Activated T-helper 1 cell treated with anti-CD3 and anti-CD28 coated beads, Interleukin-12 subunit alpha, Interleukin-12 subunit beta, Interleukin-2, Interleukin-4 antibody, amounts not matched to agents 30 ng/mL and 10 ng/mL and 1 ng/mL, durations not matched to agents 14 hours and 24 hours and 36 hours (primary cell): ENCODE measurements at regions of chr2 and their contacts with region 1.

Region 1: GRCh38 chr2:128623776-128624424 is 305.2 kb upstream of the HS6ST1 start:
- DNase-seq: peak; percentile 40
- H3K4me3 Mint-ChIP-seq: peak overlapping the region; percentile 74
- H3K27ac Mint-ChIP-seq: peak overlapping the region; percentile 82
- H3K4me1 Mint-ChIP-seq: peaks cover 31% of the 10 kb centered on the region
- H3K27me3 Mint-ChIP-seq: peaks cover 25% of the 10 kb centered on the region

Region 2: GRCh38 chr2:127563458-127564428 is 1060.2 kb before region 1 on chr2:
- intact Hi-C with region 1: loop called (anchors 5 kb)
- DNase-seq: peak; percentile 46
- H3K4me3 Mint-ChIP-seq: peak overlapping the region; percentile 12
- H3K27ac Mint-ChIP-seq: peak overlapping the region; percentile 30
- H3K4me1 Mint-ChIP-seq: peaks cover 16% of the 10 kb centered on the region
- H3K27me3 Mint-ChIP-seq: peaks cover 32% of the 10 kb centered on the region

Region 3: DNA sequence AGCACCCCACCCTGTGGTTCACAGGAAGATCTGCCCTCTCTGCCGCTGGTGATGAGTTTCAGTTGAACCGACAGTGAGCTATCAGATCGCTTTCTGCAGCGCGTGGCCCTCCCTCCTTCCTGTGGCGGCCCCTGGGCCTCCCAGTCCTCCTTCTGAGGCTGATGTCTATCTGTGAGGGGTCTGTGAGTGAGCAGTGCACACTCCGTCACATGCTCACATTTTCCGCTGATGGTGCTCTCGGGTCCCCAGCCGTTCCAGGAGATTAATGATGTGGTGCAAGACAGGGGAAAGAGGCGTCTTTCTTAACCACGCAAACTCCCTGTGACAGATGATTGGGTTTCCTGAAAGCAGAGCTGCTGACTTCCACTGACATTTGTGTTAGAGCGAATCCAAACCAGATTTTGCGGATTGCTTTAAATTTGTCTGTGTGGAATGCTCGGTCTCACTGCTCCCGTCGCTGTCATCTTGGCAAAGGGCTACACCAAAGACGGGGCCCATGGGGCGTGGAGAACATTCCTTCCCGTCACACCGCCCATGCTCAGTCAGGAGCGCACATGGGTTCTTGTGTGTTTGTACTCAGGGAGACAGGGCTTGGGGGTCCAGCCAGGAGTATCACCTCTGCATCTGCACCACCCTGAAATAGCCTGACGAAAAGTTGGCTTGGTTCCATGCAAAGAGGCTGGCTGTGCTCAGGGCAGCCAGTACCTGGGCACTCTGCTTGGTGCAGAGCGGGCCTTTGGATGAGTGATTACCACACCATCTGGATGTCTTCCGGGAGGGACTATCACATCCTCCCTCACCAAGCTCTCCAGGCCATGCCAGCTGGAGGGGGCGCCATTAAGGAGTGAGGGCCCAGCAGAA is 150.5 kb before region 1 on chr2:
- intact Hi-C with region 1: loop called (anchors 1 kb)
- DNase-seq: peak; percentile 26
- H3K4me3 Mint-ChIP-seq: peak overlapping the region; percentile 67
- H3K27ac Mint-ChIP-seq: peak overlapping the region; percentile 86
- H3K4me1 Mint-ChIP-seq: peaks cover 20% of the 10 kb centered on the region
- H3K27me3 Mint-ChIP-seq: peaks cover 6% of the 10 kb centered on the region

Region 4: GRCh38 chr2:128536925-128537620 is 86.8 kb before region 1 on chr2:
- intact Hi-C with region 1: loop called (anchors 1 kb)
- DNase-seq: no peak
- H3K4me3 Mint-ChIP-seq: no peak overlapping the region
- H3K27ac Mint-ChIP-seq: peak overlapping the region; percentile 4
- H3K4me1 Mint-ChIP-seq: peaks cover 24% of the 10 kb centered on the region
- H3K27me3 Mint-ChIP-seq: peaks cover 22% of the 10 kb centered on the region

Region 5: GRCh38 chr2:128670066-128670465 is 46.2 kb after region 1 on chr2:
- intact Hi-C with region 1: no loop called
- DNase-seq: no peak
- H3K4me3 Mint-ChIP-seq: no peak overlapping the region
- H3K27ac Mint-ChIP-seq: no peak overlapping the region
- H3K4me1 Mint-ChIP-seq: no peaks in the 10 kb centered on the region
- H3K27me3 Mint-ChIP-seq: peaks cover 13% of the 10 kb centered on the region

Region 6: DNA sequence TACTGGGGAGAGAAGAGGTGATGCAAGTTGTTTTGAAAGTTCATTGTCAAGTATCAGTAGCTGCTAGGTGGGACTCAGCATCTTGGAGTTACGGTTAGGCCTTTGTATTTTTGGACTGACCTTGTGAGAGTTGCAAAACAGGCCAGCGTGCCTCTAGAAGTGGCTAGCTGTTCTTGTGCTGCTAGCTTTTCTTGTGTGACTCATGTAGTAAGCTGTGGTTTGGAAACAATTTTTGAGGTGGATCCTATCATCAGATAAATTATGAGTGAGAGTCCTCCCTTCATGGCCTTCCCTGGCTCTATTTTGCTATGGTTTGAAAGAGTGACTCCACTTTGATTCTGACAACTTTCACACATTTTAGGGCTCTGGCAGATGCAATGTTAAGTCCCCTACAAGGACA is 104.0 kb after region 1 on chr2:
- intact Hi-C with region 1: loop called (anchors 2 kb)
- DNase-seq: no peak
- H3K4me3 Mint-ChIP-seq: no peak overlapping the region
- H3K27ac Mint-ChIP-seq: peak overlapping the region; percentile 14
- H3K4me1 Mint-ChIP-seq: peaks cover 26% of the 10 kb centered on the region
- H3K27me3 Mint-ChIP-seq: peaks cover 16% of the 10 kb centered on the region